Activated B cell treated with CpG ODN at 0.5 μM for 24 hours (primary cell): ENCODE measurements at regions of chr11 and their contacts with region 1.

Region 1: DNA sequence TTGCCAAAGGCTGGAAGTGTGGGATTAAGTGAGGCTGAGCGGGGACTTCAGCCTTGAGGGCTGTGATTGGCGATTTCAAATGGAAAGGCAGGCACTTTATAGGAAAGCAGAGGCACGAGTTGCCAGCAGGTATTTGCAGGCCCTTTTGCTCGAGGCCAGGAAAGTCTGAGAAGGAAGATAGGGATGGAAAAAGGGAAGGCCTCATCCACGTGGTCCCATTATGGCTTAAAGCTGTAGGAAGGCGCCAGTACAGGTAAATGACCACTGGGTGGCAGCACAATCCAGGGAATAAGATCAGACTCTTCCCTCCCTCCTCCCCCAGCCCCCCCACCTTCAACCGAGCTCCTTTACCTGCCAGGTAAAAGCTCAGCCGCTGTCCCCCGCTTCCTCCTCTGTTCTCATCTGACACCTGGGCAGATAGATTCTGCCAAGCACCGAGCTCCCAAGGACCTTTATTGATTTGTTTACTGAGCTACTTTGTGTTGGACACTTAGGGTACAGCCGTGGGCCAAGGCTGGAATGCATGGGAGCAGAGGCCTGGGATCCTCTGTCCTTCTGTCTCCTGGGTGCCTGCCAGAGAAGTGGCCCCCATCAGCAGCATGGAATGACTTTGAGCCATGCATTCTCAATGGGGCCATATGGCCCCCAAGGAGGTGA is 7.5 kb downstream of the P2RX3 start:
- DNase-seq: peak; percentile 40
- ATAC-seq: peak; percentile 91
- H3K4me3 Mint-ChIP-seq: no peak overlapping the region
- H3K27ac Mint-ChIP-seq: no peak overlapping the region
- H3K4me1 Mint-ChIP-seq: peaks cover 3% of the 10 kb centered on the region
- H3K27me3 Mint-ChIP-seq: peaks cover 3% of the 10 kb centered on the region
- CTCF ChIP-seq: no peak

Region 2: DNA sequence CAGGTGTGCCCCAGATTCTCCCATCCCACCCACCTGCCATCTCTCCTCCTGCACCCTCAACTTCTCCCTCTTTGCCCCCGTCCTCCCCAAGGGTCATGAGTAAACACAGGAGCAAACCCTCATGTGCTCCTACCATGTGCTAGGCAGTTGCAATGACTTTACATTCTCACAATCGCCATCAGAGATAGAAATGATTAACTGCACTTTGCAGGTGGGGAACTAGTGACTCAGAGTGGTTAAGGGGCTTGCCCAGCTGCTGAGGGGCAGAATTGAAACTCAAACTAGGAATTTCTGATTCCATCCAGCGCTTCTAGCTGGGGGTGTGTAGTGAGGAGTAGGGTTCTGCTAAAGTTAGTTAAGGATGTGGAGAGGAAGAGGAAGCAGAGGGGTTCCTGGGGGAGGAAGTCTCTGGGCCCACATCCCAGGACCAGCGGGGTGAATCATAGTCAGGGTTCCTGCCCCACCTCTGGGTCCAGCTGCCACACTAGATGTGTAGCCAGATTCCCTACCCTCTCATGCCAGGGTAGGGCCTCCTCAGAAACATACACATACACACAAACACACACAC is 60.7 kb after region 1 on chr11:
- CTCF ChIA-PET with region 1: interaction called, 3 read pairs
- POLR2A ChIA-PET with region 1: interaction called, 3 read pairs
- intact Hi-C with region 1: loop called (anchors 1 kb)
- DNase-seq: no peak
- ATAC-seq: peak; percentile 80
- H3K4me3 Mint-ChIP-seq: peak overlapping the region; percentile 40
- H3K27ac Mint-ChIP-seq: peak overlapping the region; percentile 88
- H3K4me1 Mint-ChIP-seq: peaks cover 50% of the 10 kb centered on the region
- H3K27me3 Mint-ChIP-seq: no peaks in the 10 kb centered on the region
- CTCF ChIP-seq: no peak

Region 3: DNA sequence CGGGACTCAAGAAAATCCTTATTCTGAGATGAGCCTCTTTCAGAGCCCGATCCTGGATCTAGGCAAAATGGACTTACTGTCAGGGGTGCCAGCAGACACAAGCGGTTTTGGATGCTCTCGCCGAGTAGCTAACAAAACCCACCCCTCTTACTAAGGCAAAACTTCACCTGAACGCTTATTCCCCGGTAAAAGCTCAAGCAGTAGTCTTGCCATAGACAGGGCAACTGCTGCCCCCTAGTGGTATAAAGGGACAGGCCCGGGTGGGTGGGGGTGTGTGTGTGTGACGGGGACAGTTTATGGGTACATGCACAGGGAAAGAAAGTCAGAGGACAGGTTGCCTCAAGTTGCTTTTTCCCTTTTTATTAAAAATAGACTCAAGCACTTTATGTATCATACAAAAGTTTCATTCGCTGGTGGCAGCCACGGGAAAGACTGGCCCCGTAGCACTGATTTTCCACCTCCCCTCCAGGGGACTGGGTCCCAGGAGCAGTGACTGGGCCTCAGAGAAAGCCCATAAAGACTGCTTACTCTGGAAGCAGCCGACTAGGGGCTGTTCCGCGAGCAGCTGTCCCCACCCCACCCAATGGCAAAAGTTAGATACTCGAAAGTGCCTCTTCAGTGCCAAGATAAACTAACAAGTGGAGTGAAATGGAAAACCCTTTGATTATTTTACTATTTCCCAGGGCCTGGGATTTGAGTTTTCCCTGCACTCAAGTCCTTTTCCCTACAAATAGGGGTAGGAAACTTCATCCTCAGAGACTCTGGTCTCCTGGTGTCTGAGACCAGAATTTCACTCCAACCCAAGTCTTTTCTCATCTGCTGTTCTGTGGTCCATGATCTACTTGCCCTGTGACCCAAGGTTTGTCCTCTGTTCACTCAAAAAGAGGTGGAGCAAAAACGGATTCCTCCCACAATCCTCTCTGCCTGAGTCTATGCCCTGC is 299.3 kb after region 1 on chr11:
- CTCF ChIA-PET with region 1: interaction called, 77 read pairs
- POLR2A ChIA-PET with region 1: no interaction called
- intact Hi-C with region 1: loop called (anchors 1 kb)
- DNase-seq: peak; percentile 65
- ATAC-seq: peak; percentile 82
- H3K4me3 Mint-ChIP-seq: no peak overlapping the region
- H3K27ac Mint-ChIP-seq: no peak overlapping the region
- H3K4me1 Mint-ChIP-seq: peaks cover 40% of the 10 kb centered on the region
- H3K27me3 Mint-ChIP-seq: peaks cover 58% of the 10 kb centered on the region
- CTCF ChIP-seq: no peak

Region 4: GRCh38 chr11:58513747-58514367 is 1168.2 kb after region 1 on chr11:
- CTCF ChIA-PET with region 1: no interaction called
- POLR2A ChIA-PET with region 1: no interaction called
- intact Hi-C with region 1: loop called (anchors 5 kb)
- DNase-seq: no peak
- ATAC-seq: no peak
- H3K4me3 Mint-ChIP-seq: no peak overlapping the region
- H3K27ac Mint-ChIP-seq: no peak overlapping the region
- H3K4me1 Mint-ChIP-seq: no peaks in the 10 kb centered on the region
- H3K27me3 Mint-ChIP-seq: no peaks in the 10 kb centered on the region
- CTCF ChIP-seq: no peak

Region 5: GRCh38 chr11:58788355-58789023 is 1442.8 kb after region 1 on chr11:
- CTCF ChIA-PET with region 1: no interaction called
- POLR2A ChIA-PET with region 1: no interaction called
- intact Hi-C with region 1: loop called (anchors 5 kb)
- DNase-seq: no peak
- ATAC-seq: peak; percentile 73
- H3K4me3 Mint-ChIP-seq: no peak overlapping the region
- H3K27ac Mint-ChIP-seq: no peak overlapping the region
- H3K4me1 Mint-ChIP-seq: no peaks in the 10 kb centered on the region
- H3K27me3 Mint-ChIP-seq: peaks cover 3% of the 10 kb centered on the region
- CTCF ChIP-seq: no peak